Ascending aorta (tissue), 2 donors: ENCODE measurements at regions of chr13 and their contacts with region 1.

Region 1: GRCh38 chr13:54357284-54357933 is 1328.8 kb downstream of the OLFM4 start:
- DNase-seq: no peak
- H3K4me3 ChIP-seq: no peak overlapping the region
- H3K27ac ChIP-seq: no peak overlapping the region
- H3K4me1 ChIP-seq: no peaks in the 10 kb centered on the region
- H3K27me3 ChIP-seq: no peaks in the 10 kb centered on the region
- CTCF ChIP-seq: no peak

Region 2: DNA sequence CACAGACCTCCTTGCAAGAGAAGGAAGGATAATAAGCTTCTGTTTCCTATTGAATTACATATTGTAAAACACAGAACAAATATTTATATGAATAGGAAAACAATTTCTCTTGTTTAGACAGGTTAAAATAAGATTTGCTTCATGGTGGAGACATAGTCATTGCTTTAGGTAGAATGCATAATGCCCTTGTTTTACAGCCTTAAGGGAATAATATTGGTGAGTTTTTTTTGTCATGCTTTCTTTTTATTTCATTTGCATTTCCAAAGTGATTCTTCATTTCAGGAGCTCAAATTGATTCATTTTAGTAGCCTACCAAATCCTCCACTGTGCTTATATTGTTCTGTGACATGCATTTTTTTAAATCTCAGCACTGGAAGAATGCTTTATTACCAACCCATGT is 638.1 kb before region 1 on chr13:
- intact Hi-C with region 1: loop called (anchors 5 kb)
- DNase-seq: no peak
- H3K4me3 ChIP-seq: no peak overlapping the region
- H3K27ac ChIP-seq: no peak overlapping the region
- H3K4me1 ChIP-seq: no peaks in the 10 kb centered on the region
- H3K27me3 ChIP-seq: no peaks in the 10 kb centered on the region
- CTCF ChIP-seq: no peak

Region 3: GRCh38 chr13:54261856-54262255 is 95.6 kb before region 1 on chr13:
- intact Hi-C with region 1: no loop called
- DNase-seq: no peak
- H3K4me3 ChIP-seq: no peak overlapping the region
- H3K27ac ChIP-seq: no peak overlapping the region
- H3K4me1 ChIP-seq: no peaks in the 10 kb centered on the region
- H3K27me3 ChIP-seq: no peaks in the 10 kb centered on the region
- CTCF ChIP-seq: no peak